Activated CD8-positive, alpha-beta T cell treated with anti-CD3 and anti-CD28 coated beads for 36 hours (primary cell): ENCODE measurements at regions of chr7 and their contacts with region 1.

Region 1: GRCh38 chr7:25851332-25852210 is 300.4 kb upstream of the NFE2L3 start:
- DNase-seq: peak; percentile 76
- ATAC-seq: peak; percentile 50
- H3K4me3 Mint-ChIP-seq: peak overlapping the region; percentile 56
- H3K27ac Mint-ChIP-seq: peak overlapping the region; percentile 31
- H3K4me1 Mint-ChIP-seq: peaks cover 15% of the 10 kb centered on the region
- H3K27me3 Mint-ChIP-seq: peaks cover 56% of the 10 kb centered on the region
- CTCF ChIP-seq: peak; percentile 84

Region 2: GRCh38 chr7:25389489-25390106 is 462.0 kb before region 1 on chr7:
- CTCF ChIA-PET with region 1: interaction called, 5 read pairs
- POLR2A ChIA-PET with region 1: no interaction called
- intact Hi-C with region 1: loop called (anchors 5 kb)
- DNase-seq: peak; percentile 11
- ATAC-seq: no peak
- H3K4me3 Mint-ChIP-seq: no peak overlapping the region
- H3K27ac Mint-ChIP-seq: no peak overlapping the region
- H3K4me1 Mint-ChIP-seq: no peaks in the 10 kb centered on the region
- H3K27me3 Mint-ChIP-seq: peaks cover 2% of the 10 kb centered on the region
- CTCF ChIP-seq: peak; percentile 42

Region 3: GRCh38 chr7:25565949-25566348 is 285.6 kb before region 1 on chr7:
- CTCF ChIA-PET with region 1: interaction called, 7 read pairs
- POLR2A ChIA-PET with region 1: interaction called, 3 read pairs
- intact Hi-C with region 1: loop called (anchors 5 kb)
- DNase-seq: peak; percentile 75
- ATAC-seq: peak; percentile 27
- H3K4me3 Mint-ChIP-seq: no peak overlapping the region
- H3K27ac Mint-ChIP-seq: no peak overlapping the region
- H3K4me1 Mint-ChIP-seq: peaks cover 1% of the 10 kb centered on the region
- H3K27me3 Mint-ChIP-seq: no peaks in the 10 kb centered on the region
- CTCF ChIP-seq: peak; percentile 100

Region 4: GRCh38 chr7:25809441-25809840 is 42.1 kb before region 1 on chr7:
- CTCF ChIA-PET with region 1: no interaction called
- POLR2A ChIA-PET with region 1: no interaction called
- intact Hi-C with region 1: no loop called
- DNase-seq: no peak
- ATAC-seq: no peak
- H3K4me3 Mint-ChIP-seq: no peak overlapping the region
- H3K27ac Mint-ChIP-seq: no peak overlapping the region
- H3K4me1 Mint-ChIP-seq: no peaks in the 10 kb centered on the region
- H3K27me3 Mint-ChIP-seq: no peaks in the 10 kb centered on the region
- CTCF ChIP-seq: no peak

Region 5: GRCh38 chr7:25839084-25839769 is 12.3 kb before region 1 on chr7:
- CTCF ChIA-PET with region 1: interaction called, 29 read pairs
- POLR2A ChIA-PET with region 1: no interaction called
- intact Hi-C with region 1: no loop called
- DNase-seq: no peak
- ATAC-seq: no peak
- H3K4me3 Mint-ChIP-seq: no peak overlapping the region
- H3K27ac Mint-ChIP-seq: no peak overlapping the region
- H3K4me1 Mint-ChIP-seq: no peaks in the 10 kb centered on the region
- H3K27me3 Mint-ChIP-seq: peaks cover 22% of the 10 kb centered on the region
- CTCF ChIP-seq: peak; percentile 27

Region 6: DNA sequence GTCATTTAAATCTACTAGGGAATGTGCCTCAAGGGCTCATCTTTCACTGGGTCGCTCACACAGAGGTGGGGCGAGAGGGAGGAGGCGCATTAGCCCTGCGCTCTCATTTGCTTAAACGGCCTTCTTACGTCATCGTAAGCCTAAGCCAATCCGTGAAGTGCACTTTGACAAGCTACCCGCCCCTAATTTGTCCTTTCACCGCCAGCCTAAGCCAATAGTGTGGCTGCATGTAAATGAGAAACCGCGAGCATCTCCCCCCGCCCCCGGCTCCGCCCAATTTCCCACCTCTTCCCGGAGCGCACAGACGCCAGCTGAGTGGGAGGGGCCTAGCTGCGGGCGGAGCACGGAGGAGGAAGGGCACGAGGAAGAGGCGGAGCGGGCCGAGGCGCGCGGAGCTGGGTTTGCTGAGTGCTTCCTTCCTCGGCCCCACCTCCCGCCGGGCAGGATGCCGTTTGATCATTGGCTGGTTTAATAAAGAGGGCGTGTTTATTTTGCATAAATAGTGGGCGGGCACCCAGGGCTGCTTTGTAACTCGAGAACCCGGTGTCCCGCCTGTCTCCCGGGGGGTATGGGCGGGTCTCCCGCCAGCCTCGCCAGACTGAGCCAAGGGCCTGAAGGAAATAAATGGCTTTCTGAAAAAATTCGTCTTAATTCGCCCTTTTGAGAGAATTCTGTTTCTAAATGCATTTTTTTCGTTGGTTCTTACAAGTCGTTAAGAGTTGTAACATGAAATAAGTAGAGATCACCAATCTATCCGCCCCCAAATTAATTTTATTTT is 10.9 kb after region 1 on chr7:
- CTCF ChIA-PET with region 1: interaction called, 10 read pairs
- POLR2A ChIA-PET with region 1: interaction called, 3 read pairs
- intact Hi-C with region 1: no loop called
- DNase-seq: peak; percentile 98
- ATAC-seq: peak; percentile 96
- H3K4me3 Mint-ChIP-seq: peak overlapping the region; percentile 61
- H3K27ac Mint-ChIP-seq: no peak overlapping the region
- H3K4me1 Mint-ChIP-seq: peaks cover 24% of the 10 kb centered on the region
- H3K27me3 Mint-ChIP-seq: peaks cover 43% of the 10 kb centered on the region
- CTCF ChIP-seq: no peak